ENCODE measurements at regions of chr17 and their contacts with region 1.

Region 1: DNA sequence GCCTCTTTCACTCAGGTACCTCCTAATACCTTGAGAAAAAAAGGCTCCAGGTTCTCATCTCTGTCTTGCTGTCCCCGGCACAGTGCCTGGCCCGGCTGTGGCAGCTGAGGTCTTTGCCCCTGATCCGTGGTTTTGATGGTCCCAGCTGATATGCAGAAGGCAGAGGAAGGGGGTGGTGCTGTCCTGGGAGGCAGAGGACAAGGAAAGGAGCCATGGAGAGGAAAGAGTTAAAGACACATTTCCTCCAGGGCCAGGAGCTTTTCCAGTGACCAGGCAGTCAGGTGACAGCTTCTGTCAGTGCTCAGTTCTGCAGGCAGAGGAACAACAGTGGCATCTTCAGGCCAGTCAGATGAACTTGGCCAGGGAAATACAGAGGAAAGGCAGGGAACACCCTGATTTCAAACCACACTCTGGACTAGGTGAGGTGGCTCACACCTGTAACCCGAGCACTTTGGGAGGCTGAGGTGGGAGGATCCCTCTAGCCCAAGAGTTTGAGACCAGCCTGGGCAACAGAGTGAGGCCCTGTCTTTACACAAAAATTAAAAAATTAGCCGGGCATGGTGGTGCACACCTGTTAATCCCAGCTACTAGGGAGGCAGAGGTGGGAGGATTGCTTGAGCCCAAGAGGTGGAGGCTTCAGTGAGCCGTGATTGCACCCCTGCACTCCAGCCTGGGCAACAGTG is 3.3 kb upstream of the COG1 start:
- DNase-seq: no peak
- H3K4me3 ChIP-seq: no peak overlapping the region
- H3K27ac ChIP-seq: no peak overlapping the region
- H3K4me1 ChIP-seq: peaks cover 4 to 6% of the 10 kb centered on the region in 2 donors
- H3K27me3 ChIP-seq: no peaks in the 10 kb centered on the region
- CTCF ChIP-seq: peak in 2 of 3 donors; percentile 42 to 55
- POLR2A ChIP-seq: no peak

Region 2: DNA sequence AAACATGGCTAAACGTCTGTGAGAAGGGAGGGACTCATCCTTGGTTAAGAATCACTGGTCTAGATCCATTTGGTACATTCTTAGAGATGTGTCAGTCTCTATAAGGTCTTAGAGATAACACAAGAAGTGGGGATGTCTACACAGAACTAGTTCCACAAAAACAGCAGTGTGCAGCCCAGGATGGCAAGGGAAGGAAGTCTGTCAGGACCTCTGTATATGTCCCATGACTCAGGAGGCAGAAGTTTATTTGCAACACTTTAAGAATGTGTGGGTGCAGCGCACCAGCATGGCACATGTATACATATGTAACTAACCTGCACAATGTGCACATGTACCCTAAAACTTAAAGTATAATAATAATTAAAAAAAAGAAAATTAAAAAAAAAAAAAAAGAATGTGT is 1617.2 kb before region 1 on chr17:
- intact Hi-C with region 1: no loop called
- DNase-seq: no peak
- H3K4me3 ChIP-seq: no peak overlapping the region
- H3K27ac ChIP-seq: no peak overlapping the region
- H3K4me1 ChIP-seq: no peaks in the 10 kb centered on the region
- H3K27me3 ChIP-seq: no peaks in the 10 kb centered on the region
- CTCF ChIP-seq: no peak
- POLR2A ChIP-seq: no peak

Region 3: GRCh38 chr17:73030501-73030921 is 159.0 kb before region 1 on chr17:
- intact Hi-C with region 1: no loop called
- DNase-seq: peak in 1 of 2 donors; percentile 28
- H3K4me3 ChIP-seq: no peak overlapping the region
- H3K27ac ChIP-seq: no peak overlapping the region
- H3K4me1 ChIP-seq: no peaks in the 10 kb centered on the region
- H3K27me3 ChIP-seq: no peaks in the 10 kb centered on the region
- CTCF ChIP-seq: no peak
- POLR2A ChIP-seq: no peak

Region 4: GRCh38 chr17:73798111-73798748 is 608.7 kb after region 1 on chr17:
- intact Hi-C with region 1: loop called (anchors 10 kb)
- DNase-seq: no peak
- H3K4me3 ChIP-seq: no peak overlapping the region
- H3K27ac ChIP-seq: no peak overlapping the region
- H3K4me1 ChIP-seq: no peaks in the 10 kb centered on the region
- H3K27me3 ChIP-seq: peaks cover 0 to 2% of the 10 kb centered on the region in 2 donors
- CTCF ChIP-seq: no peak
- POLR2A ChIP-seq: no peak

Region 5: GRCh38 chr17:74798239-74798707 is 1608.7 kb after region 1 on chr17:
- intact Hi-C with region 1: no loop called
- DNase-seq: no peak
- H3K4me3 ChIP-seq: no peak overlapping the region
- H3K27ac ChIP-seq: no peak overlapping the region
- H3K4me1 ChIP-seq: no peaks in the 10 kb centered on the region
- H3K27me3 ChIP-seq: no peaks in the 10 kb centered on the region
- CTCF ChIP-seq: no peak
- POLR2A ChIP-seq: no peak

Measured in breast epithelium (tissue), 4 donors.